B cell (primary cell): ENCODE measurements at regions of chr16 and their contacts with region 1.

Region 1: DNA sequence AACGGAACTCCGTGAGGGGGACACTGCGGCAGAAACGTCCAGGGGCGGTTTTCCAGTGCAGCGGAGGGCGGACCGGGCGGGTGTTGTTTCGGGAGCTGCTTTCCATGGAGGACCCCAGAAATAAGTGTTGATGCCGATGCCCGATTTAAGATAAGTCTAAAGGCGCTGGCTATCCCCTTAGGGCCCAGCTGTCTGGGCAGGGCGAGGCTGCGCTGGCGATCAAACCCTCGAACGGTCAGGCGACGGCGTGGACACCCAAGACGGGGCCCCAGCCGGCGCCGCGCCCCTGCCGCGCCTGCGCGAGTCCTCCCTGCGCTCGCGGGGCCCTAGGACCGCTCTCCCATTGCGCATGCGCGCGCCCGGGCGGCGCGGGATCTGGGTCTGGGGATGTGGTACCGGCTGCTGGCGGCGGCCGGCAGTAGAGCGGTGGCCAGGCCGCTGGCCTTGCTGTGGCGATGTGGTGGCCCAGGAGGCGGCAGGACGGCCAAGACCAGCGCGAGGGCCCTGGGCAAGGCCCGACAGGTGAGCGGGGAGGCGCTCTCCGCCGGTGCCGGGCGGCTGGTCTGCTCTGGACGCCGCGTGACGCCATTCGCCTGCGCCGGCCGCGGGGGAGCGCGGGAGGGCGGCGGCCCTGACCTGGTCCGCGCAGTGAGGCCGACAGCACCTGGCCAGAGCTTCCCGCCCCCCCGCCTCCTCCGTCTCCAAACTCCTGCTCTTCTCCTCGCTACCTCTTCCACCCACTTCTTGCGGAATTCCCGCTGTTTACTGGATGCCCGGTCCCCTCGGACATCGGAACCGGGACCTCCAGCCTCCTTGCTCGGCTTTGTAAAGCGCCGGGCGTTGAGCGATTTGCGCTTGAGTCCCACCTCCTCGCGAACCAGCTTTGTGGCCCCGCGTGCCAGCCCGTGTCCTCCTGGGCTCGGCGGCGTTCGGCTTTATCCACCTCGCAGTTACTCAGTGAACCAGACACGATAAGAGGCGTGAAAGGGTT is 24.0 kb downstream of the DEF8 start:
- DNase-seq: peak; percentile 96
- ATAC-seq: peak; percentile 92
- H3K4me3 ChIP-seq: peak overlapping the region; percentile 45 to 97 (median 82)
- H3K4me3 Mint-ChIP-seq: peak overlapping the region; percentile 99
- H3K27ac ChIP-seq: peak overlapping the region; percentile 54 to 88
- H3K27ac Mint-ChIP-seq: peak overlapping the region; percentile 98
- H3K4me1 ChIP-seq: peaks cover 30 to 42% of the 10 kb centered on the region in 2 donors
- H3K4me1 Mint-ChIP-seq: peaks cover 44% of the 10 kb centered on the region
- H3K27me3 ChIP-seq: no peaks in the 10 kb centered on the region
- H3K27me3 Mint-ChIP-seq: no peaks in the 10 kb centered on the region
- CTCF ChIP-seq: peak; percentile 17

Region 2: GRCh38 chr16:89700100-89700648 is 272.4 kb before region 1 on chr16:
- CTCF ChIA-PET with region 1: no interaction called
- POLR2A ChIA-PET with region 1: no interaction called
- intact Hi-C with region 1: no loop called
- DNase-seq: peak; percentile 99
- ATAC-seq: peak; percentile 38
- H3K4me3 ChIP-seq: peak overlapping the region; percentile 17 to 73 (median 68)
- H3K4me3 Mint-ChIP-seq: peak overlapping the region; percentile 85
- H3K27ac ChIP-seq: peak overlapping the region; percentile 76 to 82
- H3K27ac Mint-ChIP-seq: peak overlapping the region; percentile 83
- H3K4me1 ChIP-seq: peaks cover 21 to 29% of the 10 kb centered on the region in 2 donors
- H3K4me1 Mint-ChIP-seq: peaks cover 21% of the 10 kb centered on the region
- H3K27me3 ChIP-seq: no peaks in the 10 kb centered on the region
- H3K27me3 Mint-ChIP-seq: no peaks in the 10 kb centered on the region
- CTCF ChIP-seq: peak; percentile 74

Region 3: DNA sequence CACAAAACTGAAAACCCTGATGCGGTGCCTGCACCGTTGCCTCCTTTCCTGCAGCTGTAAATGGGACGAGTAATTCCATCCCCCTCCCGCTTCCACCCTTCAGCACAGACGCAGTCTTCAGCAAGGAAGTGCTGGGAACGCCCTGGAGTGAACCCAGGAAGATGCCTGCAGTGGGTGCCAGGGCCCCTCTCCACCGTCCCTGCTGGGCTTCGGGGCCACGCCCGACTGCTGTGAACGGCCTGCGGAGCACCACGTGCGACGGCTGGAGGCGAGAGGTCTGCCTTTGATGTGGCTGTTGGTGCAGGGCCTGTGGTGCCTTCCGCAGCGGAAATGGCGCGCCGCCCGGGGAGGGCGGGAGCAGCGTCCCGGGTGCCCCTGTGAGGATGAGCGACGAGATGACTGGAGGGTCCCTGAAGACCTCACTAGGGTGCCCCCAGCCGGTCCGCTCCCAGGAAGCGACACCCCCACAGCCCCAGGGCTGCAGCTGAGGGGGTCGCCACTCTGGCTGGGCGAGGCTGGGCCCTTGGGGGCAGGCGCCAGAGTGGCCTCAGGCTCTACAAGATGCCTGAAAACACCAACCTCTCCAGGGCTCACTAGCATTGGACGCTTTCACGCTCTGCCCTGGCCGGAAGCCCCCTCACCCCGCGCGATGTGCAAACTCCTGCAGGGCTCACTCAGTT is 54.6 kb before region 1 on chr16:
- CTCF ChIA-PET with region 1: interaction called, 5 read pairs
- POLR2A ChIA-PET with region 1: no interaction called
- intact Hi-C with region 1: loop called (anchors 2 kb)
- DNase-seq: peak; percentile 77
- ATAC-seq: peak; percentile 80
- H3K4me3 ChIP-seq: peak overlapping the region; percentile 8 to 59 (median 46)
- H3K4me3 Mint-ChIP-seq: peak overlapping the region; percentile 81
- H3K27ac ChIP-seq: no peak overlapping the region
- H3K27ac Mint-ChIP-seq: peak overlapping the region; percentile 61
- H3K4me1 ChIP-seq: peaks cover 39 to 41% of the 10 kb centered on the region in 2 donors
- H3K4me1 Mint-ChIP-seq: peaks cover 36% of the 10 kb centered on the region
- H3K27me3 ChIP-seq: peaks cover 0 to 45% (median 20%) of the 10 kb centered on the region in 4 experiments
- H3K27me3 Mint-ChIP-seq: peaks cover 24% of the 10 kb centered on the region
- CTCF ChIP-seq: no peak

Region 4: DNA sequence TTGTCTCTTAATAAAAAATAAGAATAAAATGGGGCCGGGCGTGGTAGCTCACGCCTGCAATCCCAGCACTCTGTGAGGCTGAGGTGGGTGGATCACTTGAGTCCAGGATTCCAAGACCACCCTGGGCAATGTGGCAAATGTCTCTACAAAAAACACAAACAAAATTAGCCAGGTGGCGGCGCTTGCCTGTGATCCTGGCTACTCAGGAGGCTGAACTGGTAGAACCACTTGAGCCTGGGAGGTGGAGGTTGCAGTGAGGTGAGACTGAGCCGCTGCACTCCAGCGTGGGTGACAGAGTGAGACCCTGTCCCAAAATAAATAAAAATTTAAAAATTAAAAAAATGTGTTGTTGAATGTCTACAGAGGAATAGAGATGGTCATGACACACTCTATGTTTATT is 26.9 kb before region 1 on chr16:
- CTCF ChIA-PET with region 1: interaction called, 5 read pairs
- POLR2A ChIA-PET with region 1: interaction called, 4 read pairs
- intact Hi-C with region 1: loop called (anchors 1 kb)
- DNase-seq: no peak
- ATAC-seq: no peak
- H3K4me3 ChIP-seq: no peak overlapping the region
- H3K4me3 Mint-ChIP-seq: no peak overlapping the region
- H3K27ac ChIP-seq: no peak overlapping the region
- H3K27ac Mint-ChIP-seq: no peak overlapping the region
- H3K4me1 ChIP-seq: peaks cover 46 to 58% of the 10 kb centered on the region in 2 donors
- H3K4me1 Mint-ChIP-seq: peaks cover 43% of the 10 kb centered on the region
- H3K27me3 ChIP-seq: peaks cover 0 to 6% (median 1%) of the 10 kb centered on the region in 4 experiments
- H3K27me3 Mint-ChIP-seq: peaks cover 24% of the 10 kb centered on the region
- CTCF ChIP-seq: no peak

Region 5: DNA sequence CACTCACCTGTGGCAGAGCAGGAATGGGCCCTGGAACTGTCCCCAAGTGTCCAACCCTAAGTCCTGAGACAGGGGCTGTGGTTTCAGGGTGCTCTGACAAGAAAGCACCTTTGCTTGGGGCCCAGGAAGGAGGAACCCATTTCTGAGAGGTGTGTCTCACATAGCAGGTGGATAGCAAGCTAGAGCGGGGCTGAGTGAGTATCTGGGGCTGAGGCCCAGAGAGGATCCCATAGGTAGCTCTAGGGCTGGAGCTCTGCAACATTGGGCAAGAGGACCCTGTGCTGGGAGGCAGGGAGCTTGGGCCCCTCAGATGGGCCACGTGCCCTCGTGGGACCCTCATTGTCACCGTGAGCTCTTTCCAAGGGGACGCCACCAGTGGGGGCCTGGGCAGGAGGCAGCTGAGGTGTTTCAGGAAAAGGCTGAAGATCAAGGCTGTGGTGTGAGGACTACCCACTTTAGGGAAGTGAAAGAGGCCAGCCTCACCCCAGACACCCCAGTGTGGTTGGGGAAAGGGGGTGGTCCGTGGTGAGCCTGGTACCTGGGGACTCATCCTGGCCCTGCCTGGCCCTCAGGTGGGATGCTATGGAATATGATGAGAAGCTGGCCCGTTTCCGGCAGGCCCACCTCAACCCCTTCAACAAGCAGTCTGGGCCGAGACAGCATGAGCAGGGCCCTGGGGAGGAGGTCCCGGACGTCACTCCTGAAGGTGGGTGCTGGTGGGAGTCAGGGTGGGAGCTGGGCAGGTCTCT is 18.7 kb before region 1 on chr16:
- CTCF ChIA-PET with region 1: interaction called, 5 read pairs
- POLR2A ChIA-PET with region 1: interaction called, 4 read pairs
- intact Hi-C with region 1: loop called (anchors 2 kb)
- DNase-seq: peak; percentile 81
- ATAC-seq: peak; percentile 73
- H3K4me3 ChIP-seq: peak overlapping the region in 3 of 5 experiments; percentile 27 to 52 (median 27)
- H3K4me3 Mint-ChIP-seq: peak overlapping the region; percentile 80
- H3K27ac ChIP-seq: peak overlapping the region; percentile 26 to 63
- H3K27ac Mint-ChIP-seq: peak overlapping the region; percentile 81
- H3K4me1 ChIP-seq: peaks cover 86 to 92% of the 10 kb centered on the region in 2 donors
- H3K4me1 Mint-ChIP-seq: peaks cover 74% of the 10 kb centered on the region
- H3K27me3 ChIP-seq: peaks cover 0 to 2% (median 0%) of the 10 kb centered on the region in 4 experiments
- H3K27me3 Mint-ChIP-seq: no peaks in the 10 kb centered on the region
- CTCF ChIP-seq: no peak

Region 6: DNA sequence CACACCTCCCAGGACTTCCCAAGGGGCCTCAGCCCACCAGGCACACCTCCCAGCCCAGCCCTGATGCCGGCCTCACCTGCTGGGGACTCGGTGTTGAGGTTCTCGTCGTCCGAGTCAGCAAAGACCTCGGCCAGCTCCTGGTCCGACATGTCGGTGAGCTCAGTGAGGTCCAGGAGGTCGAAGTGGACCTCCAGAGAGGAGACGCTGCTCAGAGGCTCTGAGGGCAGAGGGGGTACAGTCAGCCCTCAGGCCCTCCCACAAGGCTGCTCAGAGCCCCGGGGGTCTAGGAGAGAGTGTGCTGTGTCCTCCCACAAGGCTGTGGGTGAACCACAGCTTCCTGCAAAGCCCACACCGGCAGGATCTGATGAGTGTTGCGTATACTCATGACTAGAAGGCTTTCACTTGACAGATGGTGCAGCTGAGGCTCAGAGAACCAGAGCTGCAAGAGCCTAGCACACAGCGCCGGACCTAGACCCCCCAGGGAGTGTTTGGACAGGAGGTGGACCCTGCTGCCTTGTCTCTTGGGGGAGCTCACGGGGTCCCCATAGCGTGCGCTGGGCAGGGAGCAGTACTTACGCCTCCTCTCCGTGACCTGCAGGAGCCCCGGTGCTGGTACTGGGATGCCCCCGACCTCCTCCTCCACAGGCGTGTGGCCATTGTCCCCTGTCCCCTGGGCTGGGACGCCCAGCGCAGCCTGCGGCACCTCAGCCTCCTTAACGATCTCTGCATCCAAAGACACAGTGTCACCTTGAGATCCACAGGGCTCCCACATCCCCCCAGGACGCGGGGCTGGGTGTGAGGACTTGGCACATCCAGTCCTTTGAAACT is 36.4 kb after region 1 on chr16:
- CTCF ChIA-PET with region 1: interaction called, 3 read pairs
- POLR2A ChIA-PET with region 1: no interaction called
- intact Hi-C with region 1: loop called (anchors 5 kb)
- DNase-seq: peak; percentile 90
- ATAC-seq: peak; percentile 90
- H3K4me3 ChIP-seq: peak overlapping the region in 4 of 5 experiments; percentile 26 to 51 (median 38)
- H3K4me3 Mint-ChIP-seq: peak overlapping the region; percentile 80
- H3K27ac ChIP-seq: peak overlapping the region; percentile 70 to 76
- H3K27ac Mint-ChIP-seq: peak overlapping the region; percentile 92
- H3K4me1 ChIP-seq: peaks cover 54 to 68% of the 10 kb centered on the region in 2 donors
- H3K4me1 Mint-ChIP-seq: peaks cover 56% of the 10 kb centered on the region
- H3K27me3 ChIP-seq: no peaks in the 10 kb centered on the region
- H3K27me3 Mint-ChIP-seq: no peaks in the 10 kb centered on the region
- CTCF ChIP-seq: no peak

Region 7: GRCh38 chr16:90022209-90023064 is 49.9 kb after region 1 on chr16:
- CTCF ChIA-PET with region 1: interaction called, 3 read pairs
- POLR2A ChIA-PET with region 1: no interaction called
- intact Hi-C with region 1: loop called (anchors 1 kb)
- DNase-seq: peak; percentile 80
- ATAC-seq: peak; percentile 72
- H3K4me3 ChIP-seq: peak overlapping the region; percentile 8 to 50 (median 42)
- H3K4me3 Mint-ChIP-seq: peak overlapping the region; percentile 81
- H3K27ac ChIP-seq: peak overlapping the region in 1 of 2 donors; percentile 46
- H3K27ac Mint-ChIP-seq: peak overlapping the region; percentile 15
- H3K4me1 ChIP-seq: peaks cover 33 to 48% of the 10 kb centered on the region in 2 donors
- H3K4me1 Mint-ChIP-seq: peaks cover 31% of the 10 kb centered on the region
- H3K27me3 ChIP-seq: peaks cover 0 to 21% (median 6%) of the 10 kb centered on the region in 4 experiments
- H3K27me3 Mint-ChIP-seq: peaks cover 9% of the 10 kb centered on the region
- CTCF ChIP-seq: no peak